Ascending aorta (tissue), 2 donors: ENCODE measurements at regions of chr1 and their contacts with region 1.

Region 1: GRCh38 chr1:26279456-26280332 is at the start of gene SH3BGRL3:
- DNase-seq: peak; percentile 64 to 94
- H3K4me3 ChIP-seq: peak within 1 kb of the TSS; percentile 73 to 91
- H3K27ac ChIP-seq: peak within 1 kb of the TSS; percentile 90 to 99
- H3K4me1 ChIP-seq: peaks cover 33 to 61% of the 10 kb centered on the region in 2 donors
- H3K27me3 ChIP-seq: no peaks in the 10 kb centered on the region
- CTCF ChIP-seq: peak in 2 of 3 experiments; percentile 35 to 56
- total RNA-seq, gene SH3BGRL3: 228 TPM

Region 2: DNA sequence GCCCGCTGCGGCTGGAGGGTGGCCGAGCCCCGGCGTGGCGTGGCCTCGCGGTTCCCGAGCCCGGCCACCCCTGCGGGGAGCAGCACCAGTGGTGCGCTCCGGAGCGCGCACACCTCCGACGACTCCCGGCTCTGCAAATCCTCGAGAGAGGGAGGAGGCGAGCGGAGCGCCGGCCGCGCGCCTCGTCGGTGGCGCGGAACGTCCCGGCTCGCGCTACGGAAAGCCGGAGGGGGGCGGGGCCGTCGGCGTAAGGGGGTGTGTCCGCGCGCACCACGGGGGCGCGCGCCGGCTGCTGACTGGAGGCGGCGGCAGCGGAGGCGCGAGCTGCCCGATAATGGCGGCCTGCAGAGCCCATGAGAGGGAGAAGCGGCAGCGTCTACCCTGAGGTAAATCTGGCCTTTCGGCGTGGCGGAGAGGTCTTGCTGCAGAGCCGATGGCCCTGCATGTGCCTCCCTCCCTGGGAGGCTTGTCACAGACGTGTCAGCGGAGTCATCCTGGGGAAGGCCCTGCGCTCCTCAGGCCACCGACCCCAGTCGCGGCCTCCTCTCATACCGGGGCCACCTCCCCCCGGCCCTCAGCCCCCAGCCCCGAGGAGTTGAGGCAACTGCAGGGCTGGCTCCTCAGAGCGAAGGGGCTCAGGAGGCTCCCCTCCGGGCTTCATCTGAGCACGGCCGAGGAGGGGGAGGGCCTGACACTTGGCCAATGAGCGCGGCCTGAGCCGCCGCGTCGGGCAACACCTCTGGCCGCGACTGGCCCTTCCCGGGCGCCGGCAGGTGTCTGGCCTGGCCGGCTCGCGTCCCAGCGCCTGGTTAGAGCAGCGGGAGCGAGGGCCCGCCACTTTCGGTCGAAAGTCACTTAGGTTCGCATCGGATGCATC is 167.9 kb before region 1 on chr1 and contains the start of gene PDIK1L:
- intact Hi-C with region 1: loop called (anchors 2 kb)
- DNase-seq: peak; percentile 61 to 95
- H3K4me3 ChIP-seq: peak within 1 kb of the TSS; percentile 92 to 100
- H3K27ac ChIP-seq: peak within 1 kb of the TSS; percentile 89 to 90
- H3K4me1 ChIP-seq: peaks cover 0 to 16% of the 10 kb centered on the region in 2 donors
- H3K27me3 ChIP-seq: no peaks in the 10 kb centered on the region
- CTCF ChIP-seq: no peak
- total RNA-seq, gene PDIK1L: 4.0 TPM

Region 3: GRCh38 chr1:26169669-26170471 is 109.8 kb before region 1 on chr1 and contains the start of gene ZNF593:
- intact Hi-C with region 1: loop called (anchors 2 kb)
- DNase-seq: peak; percentile 35 to 96
- H3K4me3 ChIP-seq: peak within 1 kb of the TSS; percentile 63 to 90
- H3K27ac ChIP-seq: peak within 1 kb of the TSS; percentile 41 to 54
- H3K4me1 ChIP-seq: peaks cover 0 to 6% of the 10 kb centered on the region in 2 donors
- H3K27me3 ChIP-seq: no peaks in the 10 kb centered on the region
- CTCF ChIP-seq: peak; percentile 91 to 96 (median 93)
- total RNA-seq, gene ZNF593: 90.0 TPM

Region 4: DNA sequence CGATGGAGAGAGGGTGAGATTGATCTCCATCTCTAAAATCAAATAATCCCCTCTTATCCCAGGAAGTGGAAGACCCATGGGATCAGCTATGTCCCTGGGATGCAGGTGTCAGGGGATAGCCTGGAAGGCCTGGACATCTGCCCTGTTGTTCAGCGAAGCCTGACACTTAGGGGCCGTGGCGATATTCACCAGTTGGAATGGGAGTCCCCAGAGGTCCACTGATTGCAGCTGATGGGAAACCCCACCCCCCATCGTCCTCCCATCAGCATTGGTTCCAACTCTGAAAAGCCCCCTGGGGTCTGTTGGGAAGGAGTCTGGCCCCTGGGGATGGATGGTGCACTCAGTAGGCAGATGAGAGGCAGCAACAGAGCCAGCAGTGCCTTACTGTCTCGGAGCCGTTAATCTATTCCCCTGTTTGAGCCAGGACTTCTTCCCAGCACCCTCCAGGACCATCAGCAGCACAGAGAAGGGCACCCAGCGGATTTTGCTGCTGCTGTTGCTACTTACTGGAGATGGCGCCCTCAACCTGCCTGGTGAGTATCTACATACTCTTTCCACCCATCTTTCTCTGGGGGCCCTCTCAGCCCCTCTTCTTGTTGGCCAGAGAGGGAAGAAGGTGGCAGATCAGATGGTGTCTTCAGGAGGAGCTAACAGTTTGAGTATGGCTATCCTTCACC is 75.9 kb before region 1 on chr1:
- intact Hi-C with region 1: no loop called
- DNase-seq: no peak
- H3K4me3 ChIP-seq: no peak overlapping the region
- H3K27ac ChIP-seq: no peak overlapping the region
- H3K4me1 ChIP-seq: no peaks in the 10 kb centered on the region
- H3K27me3 ChIP-seq: no peaks in the 10 kb centered on the region
- CTCF ChIP-seq: no peak

Region 5: GRCh38 chr1:26306290-26307229 is 26.9 kb after region 1 on chr1 and contains the start of gene UBXN11:
- intact Hi-C with region 1: loop called (anchors 1 kb)
- DNase-seq: peak; percentile 66 to 94
- H3K4me3 ChIP-seq: peak within 1 kb of the TSS; percentile 68 to 70
- H3K27ac ChIP-seq: peak within 1 kb of the TSS; percentile 20 to 55
- H3K4me1 ChIP-seq: peaks cover 5 to 8% of the 10 kb centered on the region in 2 donors
- H3K27me3 ChIP-seq: no peaks in the 10 kb centered on the region
- CTCF ChIP-seq: no peak
- total RNA-seq, gene UBXN11: 14.5 TPM

Region 6: DNA sequence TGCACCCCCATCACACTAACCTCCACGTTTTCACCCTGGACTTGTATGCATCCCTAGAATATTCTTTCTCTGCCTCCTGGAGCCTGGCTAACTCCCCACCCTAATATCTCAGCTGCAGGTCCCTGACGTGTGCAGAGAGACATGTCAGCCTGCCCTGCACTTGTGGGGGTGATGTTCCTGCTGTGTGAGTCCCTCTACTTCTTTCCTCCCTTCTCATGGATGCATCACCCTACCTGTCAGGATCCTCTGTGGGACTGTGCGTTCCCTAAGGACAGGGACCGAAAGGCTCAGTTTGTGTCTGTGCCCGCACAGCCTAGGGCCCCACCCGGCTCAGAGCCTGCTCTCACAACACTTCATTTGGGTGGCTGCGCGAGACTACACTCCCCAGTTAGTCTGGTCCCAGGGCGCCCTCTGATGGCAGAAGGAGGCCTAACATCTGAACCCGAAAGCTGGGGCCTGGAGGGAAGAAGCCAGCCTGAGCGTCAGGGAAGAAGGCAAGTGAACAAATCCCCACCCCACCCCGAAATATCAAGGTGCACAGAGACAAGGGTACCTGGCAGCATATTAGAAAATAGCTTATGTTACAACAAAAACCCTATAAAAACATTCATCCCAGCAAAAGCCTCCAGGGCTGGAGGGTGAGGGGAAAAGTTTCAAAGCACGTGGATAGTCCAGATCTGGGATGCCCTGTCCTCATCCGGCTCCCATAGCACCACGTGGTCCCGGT is 41.8 kb after region 1 on chr1:
- intact Hi-C with region 1: loop called (anchors 1 kb)
- DNase-seq: peak; percentile 69 to 97
- H3K4me3 ChIP-seq: no peak overlapping the region
- H3K27ac ChIP-seq: no peak overlapping the region
- H3K4me1 ChIP-seq: peaks cover 0 to 3% of the 10 kb centered on the region in 2 donors
- H3K27me3 ChIP-seq: no peaks in the 10 kb centered on the region
- CTCF ChIP-seq: peak; percentile 86 to 95 (median 90)